Cardiac septum (tissue), 1 donor: ENCODE measurements at regions of chrX and their contacts with region 1.

Region 1: GRCh38 chrX:16882702-16883486 is 12.7 kb upstream of the RBBP7 start:
- DNase-seq: no peak

Region 2: GRCh38 chrX:16838202-16839066 is 44.5 kb before region 1 on chrX:
- intact Hi-C with region 1: loop called (anchors 2 kb)
- DNase-seq: no peak

Region 3: GRCh38 chrX:17046478-17047097 is 163.7 kb after region 1 on chrX:
- intact Hi-C with region 1: loop called (anchors 5 kb)
- DNase-seq: no peak

Region 4: DNA sequence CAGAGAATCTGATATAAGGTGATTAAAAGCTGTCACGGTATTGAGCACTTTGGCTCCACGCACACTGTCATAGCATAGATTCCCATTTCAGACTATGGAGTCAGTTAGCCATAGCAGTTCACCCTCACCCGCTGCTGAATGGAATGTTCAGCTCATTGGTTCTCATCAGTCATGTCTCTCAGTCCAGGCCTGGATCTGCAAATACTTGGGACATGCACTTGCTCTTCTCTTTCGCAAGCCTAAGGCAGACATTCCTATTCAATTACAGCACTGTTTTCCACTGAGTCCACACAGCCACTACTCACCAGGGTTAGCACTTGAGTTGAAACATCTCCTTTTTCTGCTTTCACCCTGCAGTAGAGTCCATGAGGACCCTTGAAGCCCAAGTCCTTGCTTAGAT is 823.8 kb after region 1 on chrX:
- intact Hi-C with region 1: no loop called
- DNase-seq: no peak